Mammary epithelial cell (primary cell): ENCODE measurements at regions of chr2 and their contacts with region 1.

Region 1: GRCh38 chr2:74334931-74335333 is 8.3 kb downstream of the SLC4A5 start:
- DNase-seq: peak; percentile 49
- H3K4me3 ChIP-seq: no peak overlapping the region
- H3K27ac ChIP-seq: no peak overlapping the region
- H3K4me1 ChIP-seq: no peaks in the 10 kb centered on the region
- H3K27me3 ChIP-seq: no peaks in the 10 kb centered on the region
- CTCF ChIP-seq: peak; percentile 96 to 98

Region 2: GRCh38 chr2:74391580-74392448 is 56.9 kb after region 1 on chr2:
- CTCF ChIA-PET with region 1: no interaction called
- dilution Hi-C with region 1: no loop called
- in situ Hi-C with region 1: no loop called
- intact Hi-C with region 1: loop called (anchors 5 kb)
- DNase-seq: peak; percentile 79
- H3K4me3 ChIP-seq: peak overlapping the region; percentile 79 to 84 (median 81)
- H3K27ac ChIP-seq: peak overlapping the region; percentile 94
- H3K4me1 ChIP-seq: peaks cover 26% of the 10 kb centered on the region
- H3K27me3 ChIP-seq: no peaks in the 10 kb centered on the region
- CTCF ChIP-seq: peak; percentile 99

Region 3: GRCh38 chr2:74440378-74441169 is 105.6 kb after region 1 on chr2:
- CTCF ChIA-PET with region 1: no interaction called
- dilution Hi-C with region 1: no loop called
- in situ Hi-C with region 1: no loop called
- intact Hi-C with region 1: no loop called
- DNase-seq: peak; percentile 81
- H3K4me3 ChIP-seq: peak overlapping the region; percentile 72 to 82 (median 73)
- H3K27ac ChIP-seq: peak overlapping the region; percentile 83
- H3K4me1 ChIP-seq: peaks cover 43% of the 10 kb centered on the region
- H3K27me3 ChIP-seq: no peaks in the 10 kb centered on the region
- CTCF ChIP-seq: peak; percentile 3 to 29

Region 4: DNA sequence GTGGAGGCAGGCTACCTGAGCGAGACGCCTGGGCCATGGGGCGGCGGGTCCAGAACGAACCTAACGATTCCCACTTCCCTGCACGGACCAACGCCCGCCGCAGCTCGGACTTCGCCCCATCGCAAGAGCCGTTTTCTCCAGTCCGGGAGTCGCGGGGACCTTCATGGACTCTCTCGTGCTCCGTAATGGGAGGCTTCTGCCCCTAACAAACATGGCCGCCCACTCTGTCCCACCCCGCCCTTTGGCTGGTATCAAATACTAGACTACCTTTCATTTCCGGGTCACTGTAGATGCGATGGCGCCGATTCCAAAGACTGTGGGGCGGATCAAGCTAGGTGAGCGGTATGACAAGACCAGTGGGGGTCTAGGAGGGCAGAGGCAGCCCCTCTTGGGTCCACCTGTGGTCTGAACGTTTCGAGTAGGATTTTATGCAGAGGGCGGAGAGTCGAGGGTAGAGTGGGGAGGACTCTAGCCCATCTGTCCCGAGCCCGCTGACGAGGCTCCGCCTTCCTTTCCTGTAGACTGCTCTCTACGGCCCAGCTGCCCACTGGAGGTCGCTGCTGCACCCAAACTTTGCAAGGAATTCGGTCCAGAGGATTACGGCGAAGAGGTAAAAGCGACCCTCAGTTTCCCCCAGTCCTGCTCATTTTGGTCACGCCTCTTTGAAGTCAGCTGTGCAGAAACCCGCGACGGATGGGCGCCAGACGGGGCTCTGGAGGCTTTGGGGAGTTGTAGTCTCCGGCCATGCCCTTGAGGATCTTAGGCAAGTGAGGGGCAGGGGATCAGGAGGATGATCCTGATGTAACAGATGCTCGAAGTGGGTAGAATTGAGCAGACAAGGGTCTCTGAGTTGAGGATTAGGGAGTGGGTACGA is 148.1 kb after region 1 on chr2 and contains the starts of genes CCDC142 and TTC31:
- CTCF ChIA-PET with region 1: no interaction called
- dilution Hi-C with region 1: no loop called
- in situ Hi-C with region 1: no loop called
- intact Hi-C with region 1: loop called (anchors 5 kb)
- DNase-seq: peak; percentile 94
- H3K4me3 ChIP-seq: peak within 1 kb of the TSS; percentile 59 to 75 (median 75)
- H3K27ac ChIP-seq: peak within 1 kb of the TSS; percentile 71
- H3K4me1 ChIP-seq: peaks cover 27% of the 10 kb centered on the region
- H3K27me3 ChIP-seq: no peaks in the 10 kb centered on the region
- CTCF ChIP-seq: peak; percentile 91 to 94
- total RNA-seq, gene CCDC142: 13.0 to 18.2 TPM
- total RNA-seq, gene TTC31: 11.5 to 22.0 TPM

Region 5: DNA sequence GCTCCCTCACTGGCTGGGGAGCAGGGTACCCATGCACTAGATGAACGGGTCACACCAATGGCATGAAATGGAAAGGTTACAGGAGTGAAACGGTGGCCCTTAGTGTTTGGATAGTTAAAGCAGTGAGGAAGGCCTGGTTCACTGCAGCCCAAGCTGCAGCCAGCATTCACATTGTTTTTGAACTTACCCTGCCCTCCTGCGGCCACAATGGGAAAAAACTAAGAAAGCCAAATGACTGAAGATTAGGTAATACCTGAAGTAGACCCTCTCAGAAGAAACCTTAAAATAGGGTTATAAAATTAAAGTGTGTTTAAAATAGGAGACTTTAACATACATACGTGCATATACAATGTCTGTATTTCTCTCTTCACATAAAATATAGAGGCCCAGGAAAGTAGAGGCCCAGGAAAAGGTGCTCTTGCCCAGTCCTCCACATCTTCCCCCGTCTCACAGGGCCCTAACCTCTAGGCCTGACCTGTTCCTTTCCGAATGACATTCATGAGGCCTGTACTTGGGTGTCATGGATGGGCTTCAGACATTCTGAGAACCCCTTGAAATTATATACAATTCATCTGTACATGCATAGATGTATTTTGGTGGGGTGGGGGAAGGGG is 252.8 kb after region 1 on chr2:
- CTCF ChIA-PET with region 1: no interaction called
- dilution Hi-C with region 1: no loop called
- in situ Hi-C with region 1: no loop called
- intact Hi-C with region 1: loop called (anchors 2 kb)
- DNase-seq: peak; percentile 51
- H3K4me3 ChIP-seq: no peak overlapping the region
- H3K27ac ChIP-seq: no peak overlapping the region
- H3K4me1 ChIP-seq: peaks cover 15% of the 10 kb centered on the region
- H3K27me3 ChIP-seq: no peaks in the 10 kb centered on the region
- CTCF ChIP-seq: peak; percentile 72 to 74